CD8-positive, alpha-beta T cell (primary cell): ENCODE measurements at regions of chr4 and their contacts with region 1.

Region 1: DNA sequence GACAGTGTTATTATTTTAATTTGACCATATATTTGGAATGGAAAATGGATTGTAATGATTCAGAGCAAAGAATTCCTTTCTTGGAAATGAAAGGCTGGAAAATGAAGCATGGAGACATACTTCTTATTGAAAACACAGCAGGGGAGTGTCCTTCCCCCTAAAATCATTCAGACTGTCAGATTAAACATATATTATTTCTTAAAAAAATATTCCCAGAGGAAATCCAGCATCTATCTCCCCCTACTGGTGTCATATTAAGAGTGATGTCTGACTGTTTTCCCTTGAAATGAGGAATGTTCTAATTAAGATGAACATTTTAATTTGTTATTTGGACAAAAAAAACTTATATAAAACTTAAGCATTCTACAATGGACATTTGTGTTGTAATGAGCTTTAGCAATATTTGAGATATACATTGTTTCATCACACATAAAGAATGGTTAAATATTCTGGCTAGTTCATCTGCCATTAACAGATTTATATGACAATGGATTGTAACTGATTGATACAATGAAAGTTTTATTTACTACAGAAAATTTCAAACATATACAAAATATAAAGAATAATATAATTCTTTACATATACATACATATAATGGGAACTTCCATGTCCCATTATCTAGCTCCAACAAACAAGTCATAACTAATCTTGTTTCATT is 264.6 kb downstream of the SPRY1 start:
- DNase-seq: peak in 2 of 9 experiments; percentile 20 to 40
- ATAC-seq: no peak
- H3K4me3 ChIP-seq: no peak overlapping the region
- H3K4me3 Mint-ChIP-seq: no peak overlapping the region
- H3K27ac ChIP-seq: no peak overlapping the region
- H3K27ac Mint-ChIP-seq: no peak overlapping the region
- H3K4me1 ChIP-seq: no peaks in the 10 kb centered on the region
- H3K4me1 Mint-ChIP-seq: no peaks in the 10 kb centered on the region
- H3K27me3 ChIP-seq: no peaks in the 10 kb centered on the region
- H3K27me3 Mint-ChIP-seq: no peaks in the 10 kb centered on the region
- CTCF ChIP-seq: peak; percentile 57

Region 2: DNA sequence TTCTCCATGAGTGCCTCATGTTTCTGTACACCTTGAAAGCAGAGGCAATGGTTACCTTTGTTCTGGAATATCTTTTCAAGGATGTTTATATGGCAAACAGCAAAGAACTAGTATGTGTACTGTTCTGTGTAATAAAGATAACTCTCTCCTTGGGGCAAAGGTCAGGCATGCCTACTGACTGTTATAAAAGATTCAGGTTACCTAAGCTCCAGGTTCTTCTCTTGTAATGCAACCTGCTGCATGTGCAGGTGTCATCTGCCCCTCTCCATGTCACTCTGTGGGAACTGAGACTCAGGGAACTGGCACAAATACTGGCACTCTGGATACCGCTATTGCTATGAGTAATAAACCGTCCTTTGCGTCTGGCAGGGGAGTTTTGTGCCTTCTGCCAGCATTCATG is 1703.9 kb before region 1 on chr4:
- CTCF ChIA-PET with region 1: no interaction called
- POLR2A ChIA-PET with region 1: no interaction called
- intact Hi-C with region 1: loop called in 1 of 2 experiments (anchors 5 kb)
- DNase-seq: no peak
- ATAC-seq: no peak
- H3K4me3 ChIP-seq: no peak overlapping the region
- H3K4me3 Mint-ChIP-seq: no peak overlapping the region
- H3K27ac ChIP-seq: no peak overlapping the region
- H3K27ac Mint-ChIP-seq: no peak overlapping the region
- H3K4me1 ChIP-seq: no peaks in the 10 kb centered on the region
- H3K4me1 Mint-ChIP-seq: peaks cover under 1% of the 10 kb centered on the region
- H3K27me3 ChIP-seq: no peaks in the 10 kb centered on the region
- H3K27me3 Mint-ChIP-seq: peaks cover 28% of the 10 kb centered on the region
- CTCF ChIP-seq: no peak

Region 3: DNA sequence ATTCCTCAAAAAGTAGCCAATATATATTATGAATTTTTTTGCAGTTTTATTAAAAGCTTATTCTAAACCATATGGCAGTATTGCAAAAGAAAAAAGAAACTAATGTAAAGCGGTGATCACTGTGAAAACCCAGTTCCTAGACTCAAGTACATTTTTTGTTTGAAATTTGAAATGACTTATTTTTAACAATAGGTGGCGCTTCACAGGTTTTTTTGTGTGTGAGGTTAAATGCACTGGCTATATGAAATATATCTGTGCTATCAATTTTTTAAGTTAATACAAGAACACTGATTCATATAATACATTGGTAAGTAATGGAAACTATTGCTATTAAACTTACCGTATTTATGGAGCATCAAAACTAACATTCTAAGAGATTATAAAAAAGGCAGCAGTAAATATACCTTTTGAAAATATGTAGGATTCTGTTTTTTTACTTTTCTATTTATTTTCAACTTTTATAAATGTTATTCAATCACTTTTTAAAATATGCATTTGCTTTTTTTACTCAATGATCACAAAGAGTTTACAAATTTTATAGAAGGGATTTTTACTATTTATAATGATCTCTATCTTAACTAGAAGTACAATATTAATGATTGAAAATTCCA is 270.3 kb before region 1 on chr4:
- CTCF ChIA-PET with region 1: interaction called, 25 read pairs
- POLR2A ChIA-PET with region 1: no interaction called
- intact Hi-C with region 1: loop called (anchors 1 kb)
- DNase-seq: peak in 2 of 9 experiments; percentile 41 to 52
- ATAC-seq: peak; percentile 40
- H3K4me3 ChIP-seq: no peak overlapping the region
- H3K4me3 Mint-ChIP-seq: no peak overlapping the region
- H3K27ac ChIP-seq: no peak overlapping the region
- H3K27ac Mint-ChIP-seq: no peak overlapping the region
- H3K4me1 ChIP-seq: no peaks in the 10 kb centered on the region
- H3K4me1 Mint-ChIP-seq: no peaks in the 10 kb centered on the region
- H3K27me3 ChIP-seq: no peaks in the 10 kb centered on the region
- H3K27me3 Mint-ChIP-seq: no peaks in the 10 kb centered on the region
- CTCF ChIP-seq: peak; percentile 76